ENCODE measurements at regions of chr3 and their contacts with region 1.

Region 1: DNA sequence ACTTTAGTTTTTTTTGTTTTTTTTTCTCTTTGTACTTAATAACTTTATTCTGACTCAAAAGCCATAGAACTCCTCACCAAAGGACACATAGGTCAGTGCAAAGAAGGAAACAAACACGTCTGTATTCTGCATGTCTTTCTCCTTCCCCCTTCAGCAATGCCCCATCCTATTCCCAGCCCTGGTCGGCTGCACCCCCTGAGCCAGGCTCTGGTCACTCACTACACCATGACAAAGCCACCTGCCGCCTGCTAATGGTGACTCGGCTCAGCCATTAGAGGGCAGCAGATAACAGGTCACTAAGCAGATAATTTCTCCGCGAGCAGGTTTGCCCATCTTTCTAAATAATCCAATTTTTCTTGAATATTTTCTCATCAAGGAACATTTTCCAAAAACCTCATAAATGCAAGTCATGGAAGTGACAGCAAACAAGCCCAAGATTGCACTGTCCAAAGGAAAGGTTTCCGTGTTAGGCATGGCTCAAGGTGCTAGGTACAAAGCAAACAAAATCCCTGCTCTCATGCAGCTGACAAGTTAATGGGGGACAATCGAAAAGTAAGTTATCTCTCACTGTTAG is 37.8 kb downstream of the TM4SF4 start:
- DNase-seq: peak; percentile 64 to 69
- H3K4me3 ChIP-seq: no peak overlapping the region
- H3K27ac ChIP-seq: no peak overlapping the region
- H3K4me1 ChIP-seq: no peaks in the 10 kb centered on the region
- H3K27me3 ChIP-seq: no peaks in the 10 kb centered on the region
- CTCF ChIP-seq: peak; percentile 76 to 90 (median 82)
- POLR2A ChIP-seq: no peak

Region 2: GRCh38 chr3:149678365-149678948 is 166.2 kb after region 1 on chr3:
- intact Hi-C with region 1: no loop called
- DNase-seq: no peak
- H3K4me3 ChIP-seq: no peak overlapping the region
- H3K27ac ChIP-seq: no peak overlapping the region
- H3K4me1 ChIP-seq: no peaks in the 10 kb centered on the region
- H3K27me3 ChIP-seq: no peaks in the 10 kb centered on the region
- CTCF ChIP-seq: no peak
- POLR2A ChIP-seq: no peak

Region 3: GRCh38 chr3:149717391-149718056 is 205.2 kb after region 1 on chr3:
- intact Hi-C with region 1: loop called (anchors 10 kb)
- DNase-seq: peak; percentile 49 to 75
- H3K4me3 ChIP-seq: no peak overlapping the region
- H3K27ac ChIP-seq: peak overlapping the region in 1 of 2 donors; percentile 16
- H3K4me1 ChIP-seq: no peaks in the 10 kb centered on the region
- H3K27me3 ChIP-seq: no peaks in the 10 kb centered on the region
- CTCF ChIP-seq: peak; percentile 76 to 90 (median 84)
- POLR2A ChIP-seq: no peak